ENCODE measurements at regions of chr7 and their contacts with region 1.

Region 1: GRCh38 chr7:106461993-106462859 is 177.4 kb upstream of the NAMPT start:
- DNase-seq: peak; percentile 13
- ATAC-seq: peak; percentile 69
- H3K4me3 Mint-ChIP-seq: peak overlapping the region; percentile 25
- H3K27ac Mint-ChIP-seq: peak overlapping the region; percentile 63
- H3K4me1 Mint-ChIP-seq: peaks cover 25% of the 10 kb centered on the region
- H3K27me3 Mint-ChIP-seq: no peaks in the 10 kb centered on the region
- CTCF ChIP-seq: peak; percentile 79

Region 2: GRCh38 chr7:105952917-105953595 is 509.2 kb before region 1 on chr7:
- CTCF ChIA-PET with region 1: no interaction called
- POLR2A ChIA-PET with region 1: no interaction called
- intact Hi-C with region 1: no loop called
- DNase-seq: no peak
- ATAC-seq: no peak
- H3K4me3 Mint-ChIP-seq: no peak overlapping the region
- H3K27ac Mint-ChIP-seq: no peak overlapping the region
- H3K4me1 Mint-ChIP-seq: no peaks in the 10 kb centered on the region
- H3K27me3 Mint-ChIP-seq: no peaks in the 10 kb centered on the region
- CTCF ChIP-seq: no peak

Region 3: DNA sequence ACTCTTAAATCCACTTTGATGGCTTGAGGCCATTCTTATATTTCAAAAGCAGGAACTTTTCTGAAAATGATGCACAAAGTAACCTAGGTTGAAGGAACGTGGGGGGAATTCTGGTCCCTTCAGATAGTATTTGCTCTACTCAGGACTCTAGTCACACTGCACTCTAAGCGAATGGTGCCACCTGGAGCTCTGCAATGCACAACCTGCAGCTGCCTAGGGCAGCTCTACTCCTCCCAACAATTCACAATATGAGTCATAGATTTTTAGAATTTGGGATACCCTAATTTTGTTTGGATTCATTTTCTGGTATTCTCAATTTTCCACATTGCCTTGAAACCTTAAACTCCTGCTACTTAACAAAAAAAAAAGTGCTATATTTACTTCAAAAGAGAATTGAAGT is 367.4 kb before region 1 on chr7:
- CTCF ChIA-PET with region 1: no interaction called
- POLR2A ChIA-PET with region 1: no interaction called
- intact Hi-C with region 1: no loop called
- DNase-seq: no peak
- ATAC-seq: no peak
- H3K4me3 Mint-ChIP-seq: no peak overlapping the region
- H3K27ac Mint-ChIP-seq: no peak overlapping the region
- H3K4me1 Mint-ChIP-seq: peaks cover 19% of the 10 kb centered on the region
- H3K27me3 Mint-ChIP-seq: no peaks in the 10 kb centered on the region
- CTCF ChIP-seq: no peak

Region 4: DNA sequence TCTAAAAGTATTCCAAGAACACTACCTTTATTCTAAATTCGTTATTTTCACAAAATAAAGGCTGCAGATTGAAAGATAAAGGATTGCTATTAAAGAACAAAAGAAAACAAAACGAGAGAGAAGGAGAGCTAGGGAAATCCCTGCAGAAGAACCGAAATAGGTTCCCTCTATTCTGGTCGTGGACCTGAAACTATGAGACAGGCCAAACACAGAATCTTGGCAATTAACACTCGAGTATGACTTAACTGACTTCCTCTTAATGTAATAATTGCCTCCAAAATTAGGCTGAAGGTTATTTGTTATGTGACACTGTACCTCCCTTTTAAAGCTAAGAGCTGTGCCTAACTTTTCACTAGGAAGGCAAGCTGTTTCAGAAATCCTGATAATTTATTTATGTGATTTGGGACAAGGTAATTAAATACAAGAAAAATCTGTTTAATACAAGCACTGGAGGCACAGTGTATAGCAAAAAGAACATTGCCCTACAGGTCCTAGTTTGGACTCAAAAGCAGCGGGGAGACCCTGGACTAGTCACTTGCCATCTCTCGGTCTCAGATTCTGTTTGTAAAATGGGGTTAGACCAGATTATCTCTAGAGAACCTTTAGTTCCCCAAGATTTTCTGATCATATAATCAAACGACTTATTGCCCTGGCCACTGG is 189.1 kb before region 1 on chr7:
- CTCF ChIA-PET with region 1: interaction called, 15 read pairs
- POLR2A ChIA-PET with region 1: no interaction called
- intact Hi-C with region 1: loop called (anchors 5 kb)
- DNase-seq: no peak
- ATAC-seq: no peak
- H3K4me3 Mint-ChIP-seq: no peak overlapping the region
- H3K27ac Mint-ChIP-seq: peak overlapping the region; percentile 42
- H3K4me1 Mint-ChIP-seq: peaks cover 37% of the 10 kb centered on the region
- H3K27me3 Mint-ChIP-seq: no peaks in the 10 kb centered on the region
- CTCF ChIP-seq: no peak

Region 5: DNA sequence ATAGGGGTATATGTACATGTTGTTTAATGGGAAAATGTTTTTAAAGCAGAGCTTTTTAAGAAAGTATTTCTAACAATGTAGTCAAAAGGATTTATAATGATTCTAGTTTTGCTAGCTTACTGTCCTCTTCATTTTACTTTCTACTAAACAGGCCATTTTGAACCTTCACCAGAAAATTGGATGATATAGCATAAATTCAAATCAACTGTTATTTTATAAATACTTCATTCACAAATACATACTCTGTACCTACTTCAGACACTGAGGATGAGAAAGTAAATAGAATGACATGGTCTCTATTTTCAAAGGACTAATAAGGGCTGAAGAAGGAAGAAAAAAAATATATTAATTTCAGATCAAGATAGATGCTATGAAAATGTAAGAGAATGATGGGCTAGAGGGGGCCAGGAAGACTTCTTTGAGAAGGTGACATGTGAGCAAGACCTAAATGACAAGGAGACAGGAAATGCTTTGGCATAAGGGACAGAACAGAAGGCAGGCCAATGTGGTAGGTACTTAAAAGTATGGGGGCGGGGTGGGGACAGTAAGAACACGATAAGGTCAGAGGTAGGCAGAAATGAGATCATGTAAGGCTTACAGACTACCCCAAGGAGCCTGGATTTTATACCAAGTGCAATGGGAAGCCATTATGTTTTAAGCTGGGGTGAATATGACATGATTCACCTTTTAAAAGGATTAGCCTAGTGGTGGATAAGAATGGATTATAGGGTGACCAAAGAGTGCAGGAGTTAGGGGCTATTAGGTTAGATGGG is 182.6 kb before region 1 on chr7:
- CTCF ChIA-PET with region 1: interaction called, 13 read pairs
- POLR2A ChIA-PET with region 1: interaction called, 18 read pairs
- intact Hi-C with region 1: loop called (anchors 5 kb)
- DNase-seq: peak; percentile 84
- ATAC-seq: peak; percentile 75
- H3K4me3 Mint-ChIP-seq: peak overlapping the region; percentile 88
- H3K27ac Mint-ChIP-seq: peak overlapping the region; percentile 96
- H3K4me1 Mint-ChIP-seq: peaks cover 43% of the 10 kb centered on the region
- H3K27me3 Mint-ChIP-seq: no peaks in the 10 kb centered on the region
- CTCF ChIP-seq: no peak

Region 6: DNA sequence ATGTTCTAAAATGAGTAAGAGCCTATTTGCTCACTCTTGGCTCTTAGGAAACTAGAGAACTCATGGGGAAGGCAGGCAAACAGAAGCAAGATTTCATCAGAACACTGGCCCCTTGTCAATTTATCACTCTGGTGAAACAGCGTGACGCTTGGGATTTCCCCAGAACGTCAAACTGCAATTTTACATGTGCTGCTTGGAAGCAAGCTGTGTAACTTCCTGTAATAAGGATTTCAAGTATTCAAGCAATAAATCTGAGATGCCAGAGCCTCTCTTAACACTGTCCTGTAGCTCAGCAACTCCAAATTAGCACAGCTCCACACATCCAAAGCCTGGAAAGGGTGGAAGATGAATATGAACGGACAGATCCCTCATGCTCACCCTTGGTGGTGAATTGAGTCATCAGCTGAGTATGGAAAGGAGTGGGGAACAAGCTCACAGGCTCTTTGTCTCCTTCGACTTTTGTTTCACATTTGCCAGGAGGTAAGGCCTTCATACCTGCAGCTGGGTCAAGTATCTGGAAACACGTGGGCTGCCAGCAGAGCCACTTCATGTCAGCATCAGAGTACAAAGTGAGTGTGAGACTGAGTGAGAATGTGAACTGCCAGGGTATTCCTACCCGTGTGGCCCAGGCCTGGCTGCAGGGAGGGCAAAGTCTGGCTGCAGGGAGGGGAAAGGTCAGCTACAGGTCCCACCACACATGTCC is 37.1 kb before region 1 on chr7:
- CTCF ChIA-PET with region 1: interaction called, 19 read pairs
- POLR2A ChIA-PET with region 1: no interaction called
- intact Hi-C with region 1: no loop called
- DNase-seq: peak; percentile 93
- ATAC-seq: peak; percentile 88
- H3K4me3 Mint-ChIP-seq: peak overlapping the region; percentile 71
- H3K27ac Mint-ChIP-seq: peak overlapping the region; percentile 98
- H3K4me1 Mint-ChIP-seq: peaks cover 72% of the 10 kb centered on the region
- H3K27me3 Mint-ChIP-seq: peaks cover under 1% of the 10 kb centered on the region
- CTCF ChIP-seq: no peak

Region 7: GRCh38 chr7:106448992-106449859 is 13.0 kb before region 1 on chr7:
- CTCF ChIA-PET with region 1: interaction called, 18 read pairs
- POLR2A ChIA-PET with region 1: interaction called, 5 read pairs
- intact Hi-C with region 1: no loop called
- DNase-seq: no peak
- ATAC-seq: peak; percentile 37
- H3K4me3 Mint-ChIP-seq: no peak overlapping the region
- H3K27ac Mint-ChIP-seq: peak overlapping the region; percentile 57
- H3K4me1 Mint-ChIP-seq: peaks cover 12% of the 10 kb centered on the region
- H3K27me3 Mint-ChIP-seq: peaks cover 22% of the 10 kb centered on the region
- CTCF ChIP-seq: no peak

Region 8: GRCh38 chr7:106485031-106485551 is 22.9 kb after region 1 on chr7:
- CTCF ChIA-PET with region 1: interaction called, 17 read pairs
- POLR2A ChIA-PET with region 1: no interaction called
- intact Hi-C with region 1: no loop called
- DNase-seq: peak; percentile 27
- ATAC-seq: peak; percentile 72
- H3K4me3 Mint-ChIP-seq: peak overlapping the region; percentile 16
- H3K27ac Mint-ChIP-seq: peak overlapping the region; percentile 89
- H3K4me1 Mint-ChIP-seq: peaks cover 60% of the 10 kb centered on the region
- H3K27me3 Mint-ChIP-seq: peaks cover 7% of the 10 kb centered on the region
- CTCF ChIP-seq: no peak